Activated CD4-positive, alpha-beta memory T cell treated with anti-CD3 and anti-CD28 coated beads for 36 hours (primary cell): ENCODE measurements at regions of chr1 and their contacts with region 1.

Region 1: DNA sequence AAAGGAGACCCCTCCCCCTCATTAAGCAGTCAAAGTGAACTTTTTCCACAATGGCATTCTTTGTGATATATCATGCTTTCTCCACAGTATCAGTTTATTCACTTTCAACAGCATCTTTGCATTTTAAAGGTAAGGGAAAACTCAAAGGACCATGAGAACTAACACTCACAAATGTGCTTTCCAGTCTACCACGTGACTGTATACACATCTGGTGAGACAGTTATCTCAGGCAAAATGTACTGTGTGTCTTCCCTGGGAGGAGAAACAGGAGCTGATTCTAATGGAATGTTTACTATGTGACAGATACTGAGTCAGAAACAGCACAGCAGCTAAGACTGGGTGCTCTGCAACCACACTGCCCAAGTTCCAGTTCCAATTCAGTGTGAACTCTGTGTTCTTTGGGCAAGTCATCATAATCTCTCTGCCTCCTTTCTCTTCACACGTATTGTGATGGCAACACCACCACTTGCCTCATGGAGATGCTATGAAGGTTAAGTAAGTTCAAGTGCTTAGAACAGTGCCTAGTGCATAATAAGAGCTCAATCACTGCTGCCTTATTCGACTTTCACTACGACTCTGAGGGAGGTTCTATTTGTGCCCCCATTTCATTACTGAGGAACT is 79.0 kb downstream of the SLC45A1 start:
- DNase-seq: peak; percentile 69
- H3K4me3 Mint-ChIP-seq: peak overlapping the region; percentile 1
- H3K27ac Mint-ChIP-seq: peak overlapping the region; percentile 70
- H3K4me1 Mint-ChIP-seq: peaks cover 70% of the 10 kb centered on the region
- H3K27me3 Mint-ChIP-seq: no peaks in the 10 kb centered on the region

Region 2: GRCh38 chr1:8097077-8097799 is 299.7 kb before region 1 on chr1:
- CTCF ChIA-PET with region 1: no interaction called
- POLR2A ChIA-PET with region 1: no interaction called
- intact Hi-C with region 1: loop called (anchors 5 kb)
- DNase-seq: peak; percentile 46
- H3K4me3 Mint-ChIP-seq: peak overlapping the region; percentile 41
- H3K27ac Mint-ChIP-seq: peak overlapping the region; percentile 90
- H3K4me1 Mint-ChIP-seq: peaks cover 39% of the 10 kb centered on the region
- H3K27me3 Mint-ChIP-seq: peaks cover 10% of the 10 kb centered on the region

Region 3: DNA sequence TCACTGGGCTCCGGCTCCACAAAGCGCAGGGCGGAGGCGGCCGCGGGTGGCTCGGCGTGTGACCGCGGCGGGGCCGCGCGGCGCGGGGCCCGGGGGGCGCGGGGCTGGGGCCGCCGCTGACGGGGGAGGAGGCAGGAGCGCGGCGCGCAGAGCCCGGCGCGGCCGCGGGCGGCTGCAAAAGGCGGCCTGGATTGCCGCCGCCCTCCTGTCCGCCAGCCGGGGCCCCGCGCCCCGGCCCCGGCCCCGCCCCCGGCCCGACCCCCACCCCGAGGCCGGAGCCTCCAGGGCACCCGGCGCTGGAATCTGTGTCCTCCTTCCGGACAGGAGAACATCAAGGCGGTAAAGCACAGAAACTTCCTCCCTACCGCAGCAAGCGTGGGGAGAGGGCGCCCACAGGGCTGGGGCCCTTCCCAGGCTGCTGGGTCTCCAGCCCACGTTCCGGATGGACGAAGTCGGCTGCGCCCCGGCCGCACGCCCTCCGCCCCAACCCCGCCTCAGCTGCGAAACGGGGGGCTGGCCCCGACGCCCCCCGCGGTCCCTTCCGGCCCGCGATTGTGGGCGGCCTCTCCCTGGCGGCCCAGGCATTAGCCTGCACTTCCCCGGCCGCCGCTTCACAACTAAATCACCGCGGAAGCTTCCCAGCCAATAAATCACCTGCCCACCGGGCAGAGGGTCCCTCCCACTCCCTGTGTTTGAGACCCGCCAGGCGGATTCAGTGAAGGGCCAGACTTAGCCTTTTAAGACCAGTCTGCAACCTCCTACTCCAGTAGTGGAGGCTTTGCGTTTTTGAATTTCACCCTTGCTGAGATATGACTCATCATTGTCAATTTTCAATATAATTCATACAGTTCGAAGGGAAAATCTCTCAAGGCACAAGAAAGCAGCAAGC is 27.0 kb after region 1 on chr1:
- CTCF ChIA-PET with region 1: interaction called, 4 read pairs
- POLR2A ChIA-PET with region 1: interaction called, 14 read pairs
- intact Hi-C with region 1: loop called (anchors 1 kb)
- DNase-seq: peak; percentile 74
- H3K4me3 Mint-ChIP-seq: peak overlapping the region; percentile 85
- H3K27ac Mint-ChIP-seq: peak overlapping the region; percentile 96
- H3K4me1 Mint-ChIP-seq: peaks cover 41% of the 10 kb centered on the region
- H3K27me3 Mint-ChIP-seq: no peaks in the 10 kb centered on the region

Region 4: DNA sequence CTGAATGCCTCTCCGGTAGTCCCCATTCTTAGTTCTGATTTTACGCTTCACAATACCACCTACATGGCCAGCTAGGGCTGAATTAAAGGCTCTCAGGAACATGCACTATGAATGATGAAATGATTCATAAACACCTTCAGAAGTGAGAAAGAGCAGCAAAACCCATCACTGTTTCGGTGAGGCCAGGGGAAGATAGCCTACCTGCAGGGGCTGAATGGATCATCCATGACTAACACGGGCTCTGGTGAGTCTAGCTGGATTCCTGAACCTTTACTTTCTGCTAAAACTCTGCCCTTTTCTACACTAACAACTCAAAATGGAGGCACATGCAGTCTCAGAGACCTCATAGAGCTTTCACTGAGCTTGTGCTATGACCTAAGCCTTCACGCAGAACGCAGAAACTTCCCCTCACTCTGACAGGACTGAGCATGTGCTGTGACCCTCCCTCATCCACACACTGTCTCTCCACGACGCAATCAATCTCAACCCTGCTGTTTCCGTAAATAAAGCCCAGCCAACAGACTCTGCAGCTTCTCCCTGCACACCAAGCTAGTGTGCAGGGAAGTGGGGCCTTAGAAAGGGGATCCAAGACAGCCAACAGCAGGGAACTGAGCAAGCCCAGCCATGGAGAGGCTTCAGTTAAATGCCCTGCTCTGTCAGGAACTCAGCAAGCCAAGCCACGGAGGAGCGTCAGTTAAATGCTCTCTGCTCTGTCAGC is 128.8 kb after region 1 on chr1:
- CTCF ChIA-PET with region 1: interaction called, 3 read pairs
- POLR2A ChIA-PET with region 1: interaction called, 5 read pairs
- intact Hi-C with region 1: loop called (anchors 1 kb)
- DNase-seq: peak; percentile 85
- H3K4me3 Mint-ChIP-seq: no peak overlapping the region
- H3K27ac Mint-ChIP-seq: no peak overlapping the region
- H3K4me1 Mint-ChIP-seq: peaks cover 18% of the 10 kb centered on the region
- H3K27me3 Mint-ChIP-seq: no peaks in the 10 kb centered on the region

Region 5: GRCh38 chr1:8660411-8660828 is 263.5 kb after region 1 on chr1:
- CTCF ChIA-PET with region 1: no interaction called
- POLR2A ChIA-PET with region 1: no interaction called
- intact Hi-C with region 1: loop called (anchors 5 kb)
- DNase-seq: no peak
- H3K4me3 Mint-ChIP-seq: no peak overlapping the region
- H3K27ac Mint-ChIP-seq: no peak overlapping the region
- H3K4me1 Mint-ChIP-seq: peaks cover 3% of the 10 kb centered on the region
- H3K27me3 Mint-ChIP-seq: no peaks in the 10 kb centered on the region

Region 6: GRCh38 chr1:8878448-8879347 is 481.8 kb after region 1 on chr1 and contains the start of gene ENO1:
- CTCF ChIA-PET with region 1: no interaction called
- POLR2A ChIA-PET with region 1: no interaction called
- intact Hi-C with region 1: loop called (anchors 10 kb)
- DNase-seq: peak; percentile 99
- H3K4me3 Mint-ChIP-seq: peak within 1 kb of the TSS; percentile 95
- H3K27ac Mint-ChIP-seq: peak within 1 kb of the TSS; percentile 100
- H3K4me1 Mint-ChIP-seq: peaks cover 31% of the 10 kb centered on the region
- H3K27me3 Mint-ChIP-seq: peaks cover 2% of the 10 kb centered on the region
- total RNA-seq, gene ENO1: 3,008 to 3,028 TPM